Activated T-helper 1 cell treated with anti-CD3 and anti-CD28 coated beads, Interleukin-12 subunit alpha, Interleukin-12 subunit beta, Interleukin-2, Interleukin-4 antibody, amounts not matched to agents 30 ng/mL and 10 ng/mL and 1 ng/mL, durations not matched to agents 14 hours and 24 hours and 36 hours (primary cell): ENCODE measurements at regions of chr14 and their contacts with region 1.

Region 1: GRCh38 chr14:95515596-95516552 is 576 bp downstream of the SYNE3 start:
- DNase-seq: peak; percentile 86
- H3K4me3 Mint-ChIP-seq: peak overlapping the region; percentile 93
- H3K27ac Mint-ChIP-seq: peak overlapping the region; percentile 94
- H3K4me1 Mint-ChIP-seq: peaks cover 76% of the 10 kb centered on the region
- H3K27me3 Mint-ChIP-seq: no peaks in the 10 kb centered on the region

Region 2: DNA sequence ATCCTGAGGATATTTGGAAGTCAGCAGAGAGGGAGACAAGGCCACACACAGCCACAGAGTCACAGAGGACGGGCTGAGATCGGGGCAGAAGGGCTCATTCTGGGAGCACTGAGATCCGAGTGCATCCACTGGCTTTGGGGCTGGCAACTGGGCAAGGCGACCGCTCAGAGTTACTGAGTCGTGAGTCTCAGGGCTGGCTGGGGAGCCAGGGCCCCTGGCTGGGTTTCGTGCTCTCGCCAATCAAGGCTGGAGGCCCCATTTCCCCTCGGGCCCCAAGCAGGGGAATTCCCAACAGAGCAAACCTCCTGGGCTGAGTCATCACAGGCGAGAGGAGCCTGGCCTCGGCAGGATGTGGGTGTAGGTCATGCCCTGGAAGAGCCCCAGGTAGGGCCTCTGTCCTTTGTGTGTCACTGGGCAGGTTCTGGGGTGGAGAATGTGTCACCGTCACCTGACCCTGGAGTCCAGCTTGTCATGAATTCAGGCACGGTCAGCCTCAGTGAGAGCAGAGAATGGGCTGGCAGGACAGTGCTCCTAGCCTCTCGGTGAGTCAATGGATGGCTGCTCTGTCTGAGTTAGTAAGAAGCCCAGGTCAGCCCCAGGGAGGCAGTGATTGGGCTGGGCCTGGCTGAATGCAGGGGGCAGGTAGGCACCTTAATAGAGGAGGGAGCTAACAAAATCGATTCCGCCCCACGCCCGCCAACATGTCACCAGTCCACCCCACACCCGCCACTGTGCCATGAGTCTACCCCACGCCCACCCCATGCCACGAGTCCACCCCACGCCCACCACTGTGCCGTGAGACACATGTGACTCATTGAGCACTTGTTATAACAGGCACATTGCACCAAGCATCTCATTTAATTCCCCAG is 1556.4 kb before region 1 on chr14:
- intact Hi-C with region 1: loop called (anchors 5 kb)
- DNase-seq: peak; percentile 94
- H3K4me3 Mint-ChIP-seq: peak overlapping the region; percentile 84
- H3K27ac Mint-ChIP-seq: peak overlapping the region; percentile 100
- H3K4me1 Mint-ChIP-seq: peaks cover 97% of the 10 kb centered on the region
- H3K27me3 Mint-ChIP-seq: no peaks in the 10 kb centered on the region

Region 3: DNA sequence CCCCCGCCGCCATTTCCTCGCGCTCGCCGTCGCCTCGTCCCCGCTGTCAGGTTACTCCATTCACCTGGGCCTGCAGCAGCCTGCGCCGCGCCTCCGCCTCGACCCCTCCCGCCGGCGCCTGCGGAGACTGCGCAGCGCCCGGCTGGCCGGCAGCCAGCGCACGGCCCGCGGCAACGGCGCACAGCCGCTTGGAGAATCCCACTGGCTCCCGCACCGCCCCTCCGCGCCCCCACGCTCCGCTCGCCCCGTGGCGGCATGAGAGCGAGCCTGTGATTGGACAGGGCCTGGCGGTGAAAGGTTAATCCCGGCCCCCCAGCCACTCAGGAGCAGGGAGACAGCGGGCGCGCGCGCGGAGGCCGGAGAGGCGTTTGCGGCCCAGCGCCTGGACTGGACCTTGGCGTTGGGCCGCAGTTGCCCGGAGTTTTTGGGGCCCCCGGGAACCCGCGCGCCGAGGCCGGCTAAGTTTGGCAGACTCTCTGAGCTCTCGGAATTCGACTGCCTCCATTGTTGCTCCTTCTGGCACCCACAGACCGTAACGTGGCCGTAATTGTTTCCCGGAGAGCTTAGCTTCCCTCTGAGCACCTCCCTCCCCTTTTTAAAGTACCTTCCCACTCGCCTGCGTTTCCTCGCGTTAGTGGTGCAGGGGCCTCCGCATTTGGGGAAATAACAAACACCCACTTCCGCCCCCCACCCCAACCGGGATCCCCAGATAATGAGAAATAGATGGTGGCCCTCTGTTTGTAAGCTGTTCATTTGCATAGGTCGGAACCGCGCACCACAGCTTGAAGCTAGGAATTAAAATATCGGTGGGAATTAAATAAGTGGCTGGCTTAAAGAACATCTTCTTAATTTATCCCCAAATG is 358.3 kb before region 1 on chr14 and contains the start of gene DICER1:
- intact Hi-C with region 1: loop called (anchors 5 kb)
- DNase-seq: peak; percentile 92
- H3K4me3 Mint-ChIP-seq: peak within 1 kb of the TSS; percentile 94
- H3K27ac Mint-ChIP-seq: peak within 1 kb of the TSS; percentile 99
- H3K4me1 Mint-ChIP-seq: peaks cover 41% of the 10 kb centered on the region
- H3K27me3 Mint-ChIP-seq: no peaks in the 10 kb centered on the region
- total RNA-seq, gene DICER1: 76.8 and 87.2 TPM in 2 replicates

Region 4: DNA sequence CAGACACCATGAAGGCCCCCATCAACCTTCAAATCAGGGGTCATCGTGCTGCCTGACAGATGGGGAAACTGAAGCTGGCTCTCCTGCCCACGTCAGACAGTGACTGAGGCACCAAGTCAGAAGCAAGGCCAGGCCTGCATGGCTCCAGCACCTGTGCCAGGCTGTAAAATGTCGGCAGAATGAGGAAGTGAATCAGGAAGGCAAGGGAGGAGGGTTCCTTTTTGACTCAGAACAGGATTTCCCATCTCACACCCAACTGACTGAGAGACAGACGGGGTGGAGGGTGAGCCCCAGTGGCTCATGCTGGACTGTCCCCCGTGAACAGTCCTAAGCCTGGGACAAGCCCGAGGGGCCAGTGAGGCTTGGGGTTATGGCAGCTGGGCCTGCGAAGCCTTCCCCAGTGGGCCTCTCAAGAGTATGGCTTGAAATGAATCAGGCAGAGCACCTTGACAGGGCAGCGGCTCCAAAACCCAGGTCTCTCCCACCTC is 20.3 kb before region 1 on chr14:
- intact Hi-C with region 1: loop called (anchors 1 kb)
- DNase-seq: no peak
- H3K4me3 Mint-ChIP-seq: peak overlapping the region; percentile 60
- H3K27ac Mint-ChIP-seq: peak overlapping the region; percentile 94
- H3K4me1 Mint-ChIP-seq: peaks cover 62% of the 10 kb centered on the region
- H3K27me3 Mint-ChIP-seq: no peaks in the 10 kb centered on the region

Region 5: DNA sequence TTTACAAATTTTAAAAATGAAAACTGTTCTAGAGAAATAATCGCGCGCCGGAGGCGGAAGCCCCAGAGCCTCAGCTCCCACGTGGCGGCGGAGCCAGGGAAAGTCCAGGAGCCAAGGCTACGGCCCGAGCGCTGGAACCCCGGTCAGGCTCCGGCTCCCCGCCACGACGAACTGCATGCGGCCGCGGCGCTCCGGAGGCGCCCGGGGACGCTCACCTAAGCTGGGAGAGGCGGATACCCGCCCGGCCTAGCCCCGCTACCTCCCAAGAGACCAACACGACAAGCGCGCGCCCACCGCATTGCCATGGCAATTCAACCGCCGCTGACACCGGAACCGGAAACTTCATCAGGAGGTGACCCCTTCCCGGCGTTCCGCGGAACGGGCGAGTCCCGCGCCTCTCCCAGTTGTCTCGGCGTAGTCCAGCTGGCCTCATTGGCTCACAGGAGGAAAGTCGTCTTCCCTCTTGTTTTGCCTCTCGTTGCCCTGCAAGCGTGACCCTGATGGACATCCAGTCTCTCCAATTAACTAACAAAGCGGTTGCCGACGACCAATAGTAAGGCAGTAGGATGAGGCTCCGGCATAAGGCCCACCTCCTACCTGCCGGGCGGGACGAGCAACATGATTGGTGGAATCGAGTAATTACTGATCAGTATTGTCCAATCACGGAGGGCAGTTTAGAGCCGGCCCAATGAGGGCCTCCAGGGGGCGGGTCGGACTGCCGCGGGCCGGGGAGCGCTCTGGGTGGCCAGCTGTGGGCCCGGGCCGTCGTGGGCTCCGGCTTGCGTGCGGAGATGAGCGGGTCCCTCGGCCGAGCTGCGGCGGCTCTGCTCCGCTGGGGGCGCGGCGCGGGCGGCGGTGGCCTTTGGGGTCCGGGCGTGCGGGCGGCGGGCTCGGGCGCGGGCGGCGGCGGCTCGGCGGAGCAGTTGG is 18.7 kb after region 1 on chr14 and contains the start of gene GLRX5:
- intact Hi-C with region 1: loop called (anchors 1 kb)
- DNase-seq: peak; percentile 98
- H3K4me3 Mint-ChIP-seq: peak within 1 kb of the TSS; percentile 98
- H3K27ac Mint-ChIP-seq: peak within 1 kb of the TSS; percentile 95
- H3K4me1 Mint-ChIP-seq: peaks cover 73% of the 10 kb centered on the region
- H3K27me3 Mint-ChIP-seq: no peaks in the 10 kb centered on the region
- total RNA-seq, gene GLRX5: 46.7 and 48.9 TPM in 2 replicates

Region 6: DNA sequence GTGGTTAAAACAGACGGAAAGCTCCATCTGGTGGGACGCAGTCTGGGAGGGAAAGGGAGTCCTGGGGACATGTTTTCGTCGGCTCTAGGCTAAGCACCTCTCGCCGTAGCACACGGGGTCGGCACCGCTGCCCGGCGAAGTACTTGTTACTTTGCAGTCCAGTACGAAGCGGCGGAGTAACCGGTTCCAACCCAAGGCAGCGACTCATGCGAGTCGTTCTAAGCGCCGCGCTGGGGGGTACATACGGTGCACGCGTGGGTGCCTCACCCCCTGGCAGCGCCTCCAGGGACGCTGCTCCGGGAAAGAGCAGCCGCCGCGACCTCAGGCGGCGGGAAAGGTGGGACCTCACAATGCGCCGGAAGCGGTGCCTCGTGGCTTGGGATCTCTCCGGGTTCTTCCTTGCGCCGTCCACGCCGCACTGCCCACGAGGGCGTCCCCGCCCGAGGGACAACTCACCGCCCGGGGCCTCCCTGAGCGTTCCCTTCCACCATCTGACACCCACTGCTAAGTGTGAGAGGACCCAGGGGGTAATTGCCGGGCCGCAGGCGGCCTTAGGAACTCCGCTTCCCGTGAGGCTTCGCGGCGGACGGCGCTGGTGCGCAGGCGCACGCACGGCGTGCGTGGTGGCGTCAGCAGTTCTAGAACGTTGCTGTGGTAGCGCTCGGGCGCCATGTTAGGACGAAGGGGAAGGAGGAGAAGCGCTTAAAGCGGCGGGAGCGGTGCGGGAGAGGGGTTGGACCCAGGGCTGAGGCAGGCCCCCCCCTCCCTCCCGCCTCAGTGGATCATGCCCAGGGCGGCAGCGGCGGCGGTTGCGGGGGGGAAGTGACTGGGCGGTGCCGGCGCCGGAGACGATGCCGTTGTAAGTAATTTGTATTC is 986.1 kb after region 1 on chr14 and contains the start of gene PAPOLA:
- intact Hi-C with region 1: loop called (anchors 5 kb)
- DNase-seq: peak; percentile 96
- H3K4me3 Mint-ChIP-seq: peak within 1 kb of the TSS; percentile 97
- H3K27ac Mint-ChIP-seq: peak within 1 kb of the TSS; percentile 97
- H3K4me1 Mint-ChIP-seq: peaks cover 47% of the 10 kb centered on the region
- H3K27me3 Mint-ChIP-seq: peaks cover 16% of the 10 kb centered on the region
- total RNA-seq, gene PAPOLA: 191 and 217 TPM in 2 replicates